CD8-positive, alpha-beta T cell (primary cell): ENCODE measurements at regions of chr20 and their contacts with region 1.

Region 1: DNA sequence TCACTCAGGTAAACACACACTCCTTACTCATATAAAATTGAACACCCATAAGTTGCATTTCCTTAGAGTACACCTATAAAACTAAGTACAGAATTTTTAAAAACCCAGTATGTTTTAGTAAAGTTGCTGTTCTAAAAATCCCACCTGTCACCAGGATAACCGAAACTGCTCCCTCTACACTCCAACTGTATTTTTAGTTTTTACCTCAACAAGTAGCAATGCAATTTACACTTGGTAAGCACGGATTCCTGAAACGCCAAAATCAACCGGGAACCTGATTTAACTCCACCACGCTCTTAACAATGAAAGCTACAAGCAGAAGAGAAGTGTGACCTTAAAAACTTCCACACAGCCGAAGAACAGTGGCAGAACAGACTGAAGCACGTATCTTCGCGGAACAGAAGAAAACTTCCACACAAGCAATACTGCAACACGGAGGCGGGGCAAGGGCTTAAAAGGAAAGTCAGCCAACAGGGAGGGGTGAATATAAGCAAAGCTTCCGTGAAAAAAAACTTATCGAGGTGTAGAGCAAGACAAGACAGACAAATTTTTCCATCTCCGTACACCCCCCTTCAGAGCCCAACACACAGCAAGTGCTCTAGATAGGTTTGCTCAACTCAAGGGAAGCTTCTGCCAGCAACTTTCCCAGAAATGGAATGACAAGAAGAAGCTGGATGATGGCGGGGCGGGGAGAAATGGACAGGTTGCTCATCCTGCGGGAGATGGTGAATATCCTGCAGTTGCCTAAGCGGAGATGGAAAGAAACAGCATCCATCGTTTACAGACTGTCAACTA is 1.4 kb downstream of the STAU1 start:
- DNase-seq: peak; percentile 22 to 84 (median 69)
- ATAC-seq: peak; percentile 41
- H3K4me3 ChIP-seq: peak overlapping the region; percentile 67 to 82
- H3K4me3 Mint-ChIP-seq: peak overlapping the region; percentile 85
- H3K27ac ChIP-seq: peak overlapping the region; percentile 46 to 81
- H3K27ac Mint-ChIP-seq: peak overlapping the region; percentile 77
- H3K4me1 ChIP-seq: peaks cover 41% of the 10 kb centered on the region
- H3K4me1 Mint-ChIP-seq: peaks cover 47% of the 10 kb centered on the region
- H3K27me3 ChIP-seq: peaks cover 0 to 2% of the 10 kb centered on the region in 2 experiments
- H3K27me3 Mint-ChIP-seq: no peaks in the 10 kb centered on the region
- CTCF ChIP-seq: no peak

Region 2: DNA sequence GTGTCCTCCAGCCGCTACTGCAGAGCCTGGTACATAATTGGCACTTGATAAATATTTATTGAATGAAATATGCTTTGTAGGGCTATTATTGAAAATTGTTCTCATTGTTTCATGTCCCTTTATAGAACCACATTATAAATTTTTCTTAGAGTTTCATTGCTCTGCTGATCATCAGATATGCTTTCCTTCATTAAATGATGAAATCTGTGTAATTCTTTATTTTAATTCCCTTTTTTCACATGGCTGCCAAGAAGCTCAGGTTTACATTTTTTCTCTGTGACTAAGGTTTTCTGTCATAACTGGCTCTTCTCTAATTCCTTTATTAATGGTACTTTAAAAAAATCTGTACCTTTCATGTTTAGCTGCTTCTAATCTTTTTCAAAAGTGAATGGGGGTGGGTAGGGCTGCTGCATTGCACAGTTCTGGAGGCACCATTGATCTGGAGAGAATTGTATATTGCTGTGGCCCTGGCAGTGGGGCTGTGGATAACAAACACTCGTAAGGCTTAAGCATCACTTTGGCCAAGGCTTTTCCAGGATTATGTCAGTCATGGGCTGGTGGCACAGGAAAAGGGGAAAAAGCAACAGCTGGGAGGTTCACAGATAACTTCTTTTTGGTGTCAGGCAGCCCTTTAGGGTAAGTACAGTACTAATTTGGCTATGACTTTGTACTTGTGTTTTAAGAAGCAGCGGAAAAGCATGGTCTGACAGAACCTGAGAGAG is 221.4 kb before region 1 on chr20:
- CTCF ChIA-PET with region 1: no interaction called
- POLR2A ChIA-PET with region 1: no interaction called
- intact Hi-C with region 1: no loop called
- DNase-seq: no peak
- ATAC-seq: no peak
- H3K4me3 ChIP-seq: no peak overlapping the region
- H3K4me3 Mint-ChIP-seq: no peak overlapping the region
- H3K27ac ChIP-seq: no peak overlapping the region
- H3K27ac Mint-ChIP-seq: no peak overlapping the region
- H3K4me1 ChIP-seq: no peaks in the 10 kb centered on the region
- H3K4me1 Mint-ChIP-seq: no peaks in the 10 kb centered on the region
- H3K27me3 ChIP-seq: no peaks in the 10 kb centered on the region
- H3K27me3 Mint-ChIP-seq: no peaks in the 10 kb centered on the region
- CTCF ChIP-seq: no peak

Region 3: GRCh38 chr20:49046087-49046900 is 140.4 kb before region 1 on chr20 and contains the start of gene CSE1L:
- CTCF ChIA-PET with region 1: no interaction called
- POLR2A ChIA-PET with region 1: no interaction called
- intact Hi-C with region 1: loop called (anchors 1 kb)
- DNase-seq: peak; percentile 86 to 98 (median 95)
- ATAC-seq: peak; percentile 89
- H3K4me3 ChIP-seq: peak within 1 kb of the TSS; percentile 81 to 96
- H3K4me3 Mint-ChIP-seq: peak within 1 kb of the TSS; percentile 98
- H3K27ac ChIP-seq: peak within 1 kb of the TSS; percentile 85 to 90
- H3K27ac Mint-ChIP-seq: peak within 1 kb of the TSS; percentile 97
- H3K4me1 ChIP-seq: peaks cover 27% of the 10 kb centered on the region
- H3K4me1 Mint-ChIP-seq: peaks cover 34% of the 10 kb centered on the region
- H3K27me3 ChIP-seq: no peaks in the 10 kb centered on the region
- H3K27me3 Mint-ChIP-seq: no peaks in the 10 kb centered on the region
- CTCF ChIP-seq: no peak
- total RNA-seq, gene CSE1L: 31.8 to 33.4 TPM

Region 4: GRCh38 chr20:49132995-49133478 is 53.7 kb before region 1 on chr20:
- CTCF ChIA-PET with region 1: interaction called, 6 read pairs
- POLR2A ChIA-PET with region 1: no interaction called
- intact Hi-C with region 1: loop called (anchors 2 kb)
- DNase-seq: peak in 3 of 9 experiments; percentile 18 to 75 (median 65)
- ATAC-seq: peak; percentile 55
- H3K4me3 ChIP-seq: no peak overlapping the region
- H3K4me3 Mint-ChIP-seq: no peak overlapping the region
- H3K27ac ChIP-seq: no peak overlapping the region
- H3K27ac Mint-ChIP-seq: no peak overlapping the region
- H3K4me1 ChIP-seq: no peaks in the 10 kb centered on the region
- H3K4me1 Mint-ChIP-seq: peaks cover 5% of the 10 kb centered on the region
- H3K27me3 ChIP-seq: no peaks in the 10 kb centered on the region
- H3K27me3 Mint-ChIP-seq: no peaks in the 10 kb centered on the region
- CTCF ChIP-seq: peak; percentile 63

Region 5: DNA sequence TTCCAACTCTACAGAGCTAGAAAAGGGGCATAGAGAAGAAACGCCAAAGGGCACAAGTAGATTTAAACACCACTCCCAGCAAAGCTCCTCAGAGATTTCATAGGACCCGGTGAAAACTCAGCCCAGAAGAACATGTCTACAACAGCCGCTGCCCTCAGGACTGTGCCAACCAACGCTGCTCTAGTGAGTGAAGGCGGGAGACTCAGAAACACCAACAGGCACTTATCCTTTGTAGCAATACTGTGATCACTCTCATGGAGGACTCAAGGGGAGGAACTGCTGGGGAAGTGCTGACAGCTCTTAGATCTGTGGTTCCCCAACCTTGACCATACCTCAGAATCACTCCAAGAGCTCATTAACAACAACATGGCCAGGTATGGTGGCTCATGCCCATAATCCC is 38.1 kb before region 1 on chr20:
- CTCF ChIA-PET with region 1: no interaction called
- POLR2A ChIA-PET with region 1: no interaction called
- intact Hi-C with region 1: no loop called
- DNase-seq: no peak
- ATAC-seq: no peak
- H3K4me3 ChIP-seq: no peak overlapping the region
- H3K4me3 Mint-ChIP-seq: no peak overlapping the region
- H3K27ac ChIP-seq: no peak overlapping the region
- H3K27ac Mint-ChIP-seq: no peak overlapping the region
- H3K4me1 ChIP-seq: no peaks in the 10 kb centered on the region
- H3K4me1 Mint-ChIP-seq: peaks cover 26% of the 10 kb centered on the region
- H3K27me3 ChIP-seq: no peaks in the 10 kb centered on the region
- H3K27me3 Mint-ChIP-seq: no peaks in the 10 kb centered on the region
- CTCF ChIP-seq: no peak

Region 6: DNA sequence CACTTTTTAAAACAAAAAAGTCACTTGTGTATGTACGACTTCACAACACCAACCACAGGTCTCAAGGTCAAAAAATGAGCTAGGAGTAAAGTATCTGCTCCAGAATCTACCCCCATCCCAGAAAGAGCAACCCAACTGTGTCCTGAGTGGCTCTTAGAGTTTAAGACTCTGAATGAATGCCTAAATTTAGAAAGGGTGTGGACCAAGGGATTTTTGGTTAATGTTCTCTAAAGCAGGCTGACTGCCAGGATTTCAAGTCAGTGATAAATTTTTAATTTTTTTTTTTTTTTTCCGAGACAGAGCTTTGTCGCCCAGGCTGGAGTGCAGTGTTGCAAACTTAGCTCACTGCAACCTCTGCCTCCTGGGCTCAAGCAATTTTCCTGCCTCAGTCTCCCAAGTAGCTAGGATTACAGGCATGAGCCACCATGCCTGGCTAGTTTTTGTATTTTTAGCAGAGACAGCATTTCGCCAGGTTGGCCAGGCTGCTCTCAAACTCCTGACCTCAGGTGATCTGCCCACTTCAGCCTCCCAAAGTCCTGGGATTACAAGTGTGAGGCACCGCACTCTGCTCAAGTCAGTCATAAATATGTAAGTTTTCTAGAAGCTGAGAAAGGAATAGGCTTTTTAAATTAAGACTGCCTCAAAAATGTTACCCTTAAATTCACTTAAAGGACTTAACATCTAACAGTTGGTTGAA is 18.8 kb before region 1 on chr20:
- CTCF ChIA-PET with region 1: interaction called, 4 read pairs
- POLR2A ChIA-PET with region 1: no interaction called
- intact Hi-C with region 1: loop called in 1 of 2 experiments (anchors 2 kb)
- DNase-seq: no peak
- ATAC-seq: no peak
- H3K4me3 ChIP-seq: no peak overlapping the region
- H3K4me3 Mint-ChIP-seq: no peak overlapping the region
- H3K27ac ChIP-seq: no peak overlapping the region
- H3K27ac Mint-ChIP-seq: no peak overlapping the region
- H3K4me1 ChIP-seq: peaks cover 34% of the 10 kb centered on the region
- H3K4me1 Mint-ChIP-seq: peaks cover 58% of the 10 kb centered on the region
- H3K27me3 ChIP-seq: no peaks in the 10 kb centered on the region
- H3K27me3 Mint-ChIP-seq: no peaks in the 10 kb centered on the region
- CTCF ChIP-seq: no peak